CD8-positive, alpha-beta T cell (primary cell): ENCODE measurements at regions of chr12 and their contacts with region 1.

Region 1: DNA sequence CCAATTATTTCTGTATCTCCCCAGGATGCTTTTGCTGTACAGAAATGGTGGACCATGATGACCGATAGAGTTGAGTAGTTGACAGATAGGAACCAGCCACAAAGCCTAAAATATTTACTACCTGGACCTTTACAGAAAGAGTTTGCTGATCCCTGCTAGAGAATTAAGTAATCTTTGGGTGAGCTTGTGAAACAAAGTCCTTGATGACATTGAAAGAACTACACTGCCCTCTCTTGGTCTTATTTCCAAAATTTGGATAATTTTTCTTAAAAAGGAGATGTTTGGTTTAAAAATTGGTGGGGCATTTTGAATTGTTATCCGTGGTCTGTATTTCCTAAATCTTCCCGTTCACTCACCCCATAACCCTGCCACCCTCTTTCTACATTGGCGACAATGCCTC is 13.7 kb upstream of the TCTN1 start:
- DNase-seq: peak in 2 of 9 experiments; percentile 61 to 73
- ATAC-seq: peak; percentile 48
- H3K4me3 ChIP-seq: no peak overlapping the region
- H3K4me3 Mint-ChIP-seq: no peak overlapping the region
- H3K27ac ChIP-seq: no peak overlapping the region
- H3K27ac Mint-ChIP-seq: peak overlapping the region; percentile 34
- H3K4me1 ChIP-seq: no peaks in the 10 kb centered on the region
- H3K4me1 Mint-ChIP-seq: peaks cover 4% of the 10 kb centered on the region
- H3K27me3 ChIP-seq: no peaks in the 10 kb centered on the region
- H3K27me3 Mint-ChIP-seq: no peaks in the 10 kb centered on the region
- CTCF ChIP-seq: peak; percentile 56

Region 2: DNA sequence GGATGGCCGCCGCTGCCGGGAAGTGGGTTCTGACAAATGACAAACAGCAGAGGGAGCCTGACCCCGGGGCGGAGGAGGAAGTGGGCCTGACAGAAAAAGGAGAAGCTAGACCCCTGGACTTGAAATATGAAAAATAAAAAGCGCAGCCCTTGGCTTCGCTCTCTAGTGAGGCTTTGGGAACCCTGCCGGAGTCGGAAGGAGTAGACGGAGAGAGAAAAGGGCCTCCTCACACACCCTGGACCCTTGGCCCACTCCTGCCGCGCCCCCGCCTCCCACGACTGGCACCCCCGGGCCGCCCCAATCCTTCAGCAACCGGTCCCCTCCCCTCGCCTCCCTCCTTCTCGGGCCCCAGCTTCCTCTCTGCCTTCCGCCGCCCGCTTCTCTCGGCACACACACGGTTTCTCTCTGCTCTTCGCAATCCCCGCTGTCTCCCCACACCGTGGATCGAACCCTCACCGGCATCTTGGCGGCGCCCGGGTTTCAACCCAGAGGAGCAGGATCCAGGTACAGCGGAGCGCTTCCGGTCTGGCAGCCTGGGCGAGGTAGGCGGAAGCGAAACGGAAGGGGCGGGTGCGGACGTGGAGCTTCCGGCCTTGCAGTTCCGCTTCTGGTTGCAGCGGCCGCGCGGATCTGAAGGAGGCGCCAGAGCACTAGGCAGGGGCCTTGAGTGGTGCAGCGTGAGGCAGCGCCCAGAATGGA is 150.3 kb before region 1 on chr12 and contains the start of gene ARPC3:
- CTCF ChIA-PET with region 1: interaction called, 150 read pairs
- POLR2A ChIA-PET with region 1: interaction called, 23 read pairs
- intact Hi-C with region 1: loop called (anchors 1 kb)
- DNase-seq: peak; percentile 91 to 98 (median 95)
- ATAC-seq: peak; percentile 95
- H3K4me3 ChIP-seq: peak within 1 kb of the TSS; percentile 80 to 95
- H3K4me3 Mint-ChIP-seq: peak within 1 kb of the TSS; percentile 100
- H3K27ac ChIP-seq: peak within 1 kb of the TSS; percentile 93 to 98
- H3K27ac Mint-ChIP-seq: peak within 1 kb of the TSS; percentile 100
- H3K4me1 ChIP-seq: peaks cover 31% of the 10 kb centered on the region
- H3K4me1 Mint-ChIP-seq: peaks cover 35% of the 10 kb centered on the region
- H3K27me3 ChIP-seq: no peaks in the 10 kb centered on the region
- H3K27me3 Mint-ChIP-seq: no peaks in the 10 kb centered on the region
- CTCF ChIP-seq: peak; percentile 76
- total RNA-seq, gene ARPC3: 123 to 136 TPM

Region 3: GRCh38 chr12:110508071-110508586 is 92.1 kb before region 1 on chr12:
- CTCF ChIA-PET with region 1: interaction called, 128 read pairs
- POLR2A ChIA-PET with region 1: no interaction called
- intact Hi-C with region 1: loop called (anchors 1 kb)
- DNase-seq: no peak
- ATAC-seq: no peak
- H3K4me3 ChIP-seq: no peak overlapping the region
- H3K4me3 Mint-ChIP-seq: no peak overlapping the region
- H3K27ac ChIP-seq: no peak overlapping the region
- H3K27ac Mint-ChIP-seq: no peak overlapping the region
- H3K4me1 ChIP-seq: no peaks in the 10 kb centered on the region
- H3K4me1 Mint-ChIP-seq: peaks cover 2% of the 10 kb centered on the region
- H3K27me3 ChIP-seq: no peaks in the 10 kb centered on the region
- H3K27me3 Mint-ChIP-seq: no peaks in the 10 kb centered on the region
- CTCF ChIP-seq: no peak

Region 4: GRCh38 chr12:110537605-110538409 is 62.4 kb before region 1 on chr12:
- CTCF ChIA-PET with region 1: interaction called, 25 read pairs
- POLR2A ChIA-PET with region 1: no interaction called
- intact Hi-C with region 1: no loop called
- DNase-seq: no peak
- ATAC-seq: no peak
- H3K4me3 ChIP-seq: no peak overlapping the region
- H3K4me3 Mint-ChIP-seq: no peak overlapping the region
- H3K27ac ChIP-seq: no peak overlapping the region
- H3K27ac Mint-ChIP-seq: no peak overlapping the region
- H3K4me1 ChIP-seq: no peaks in the 10 kb centered on the region
- H3K4me1 Mint-ChIP-seq: peaks cover 7% of the 10 kb centered on the region
- H3K27me3 ChIP-seq: no peaks in the 10 kb centered on the region
- H3K27me3 Mint-ChIP-seq: no peaks in the 10 kb centered on the region
- CTCF ChIP-seq: no peak

Region 5: GRCh38 chr12:110563702-110564640 is 36.3 kb before region 1 on chr12:
- CTCF ChIA-PET with region 1: interaction called, 83 read pairs
- POLR2A ChIA-PET with region 1: interaction called, 3 read pairs
- intact Hi-C with region 1: no loop called
- DNase-seq: no peak
- ATAC-seq: no peak
- H3K4me3 ChIP-seq: no peak overlapping the region
- H3K4me3 Mint-ChIP-seq: no peak overlapping the region
- H3K27ac ChIP-seq: peak overlapping the region; percentile 9 to 61
- H3K27ac Mint-ChIP-seq: peak overlapping the region; percentile 82
- H3K4me1 ChIP-seq: peaks cover 61% of the 10 kb centered on the region
- H3K4me1 Mint-ChIP-seq: peaks cover 72% of the 10 kb centered on the region
- H3K27me3 ChIP-seq: no peaks in the 10 kb centered on the region
- H3K27me3 Mint-ChIP-seq: no peaks in the 10 kb centered on the region
- CTCF ChIP-seq: no peak

Region 6: GRCh38 chr12:110613771-110614684 is 13.8 kb after region 1 on chr12 and contains the start of gene TCTN1:
- CTCF ChIA-PET with region 1: interaction called, 66 read pairs
- POLR2A ChIA-PET with region 1: interaction called, 7 read pairs
- intact Hi-C with region 1: no loop called
- DNase-seq: peak; percentile 90 to 97 (median 95)
- ATAC-seq: peak; percentile 100
- H3K4me3 ChIP-seq: peak within 1 kb of the TSS; percentile 75 to 76
- H3K4me3 Mint-ChIP-seq: peak within 1 kb of the TSS; percentile 88
- H3K27ac ChIP-seq: peak within 1 kb of the TSS; percentile 78 to 83
- H3K27ac Mint-ChIP-seq: peak within 1 kb of the TSS; percentile 85
- H3K4me1 ChIP-seq: peaks cover 5% of the 10 kb centered on the region
- H3K4me1 Mint-ChIP-seq: peaks cover 7% of the 10 kb centered on the region
- H3K27me3 ChIP-seq: no peaks in the 10 kb centered on the region
- H3K27me3 Mint-ChIP-seq: no peaks in the 10 kb centered on the region
- CTCF ChIP-seq: no peak
- total RNA-seq, gene TCTN1: 4.7 to 4.9 TPM

Region 7: DNA sequence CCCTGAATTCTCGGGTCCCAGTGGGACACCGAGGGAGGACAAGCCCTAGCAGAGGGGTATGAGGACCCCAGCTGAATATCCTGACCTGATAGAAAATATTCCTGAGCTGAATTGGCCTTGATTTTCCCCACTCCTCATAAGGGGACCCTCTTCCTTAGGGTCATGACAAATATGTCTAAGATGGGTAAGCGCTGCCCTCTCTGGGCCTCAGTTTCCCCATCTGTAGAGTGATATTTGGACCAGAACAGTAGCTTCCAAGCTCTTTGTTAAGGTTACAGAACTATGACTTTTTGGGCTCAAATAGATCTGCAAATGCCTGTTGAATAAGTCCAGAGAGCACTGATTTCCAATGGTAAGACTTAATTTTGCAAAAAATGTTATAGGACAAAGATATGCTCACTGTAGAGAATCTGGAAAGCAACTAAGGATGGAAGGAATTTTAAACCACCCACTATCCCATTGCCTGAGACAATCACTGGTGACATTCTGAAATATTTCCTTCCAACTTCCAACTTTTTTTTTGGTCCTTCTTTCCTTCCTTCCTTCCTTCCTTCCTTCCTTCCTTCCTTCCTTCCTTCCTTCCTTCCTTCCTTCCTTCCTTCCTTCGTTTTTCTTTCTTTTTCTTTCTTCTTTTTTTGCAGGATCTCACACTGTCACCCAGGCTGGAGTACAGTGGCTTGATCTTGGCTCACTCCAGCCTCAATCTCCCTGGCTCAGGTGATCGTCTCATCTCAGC is 288.2 kb after region 1 on chr12:
- CTCF ChIA-PET with region 1: interaction called, 16 read pairs
- POLR2A ChIA-PET with region 1: no interaction called
- intact Hi-C with region 1: loop called in 1 of 2 experiments (anchors 5 kb)
- DNase-seq: no peak
- ATAC-seq: no peak
- H3K4me3 ChIP-seq: no peak overlapping the region
- H3K4me3 Mint-ChIP-seq: peak overlapping the region; percentile 94
- H3K27ac ChIP-seq: no peak overlapping the region
- H3K27ac Mint-ChIP-seq: no peak overlapping the region
- H3K4me1 ChIP-seq: no peaks in the 10 kb centered on the region
- H3K4me1 Mint-ChIP-seq: peaks cover 4% of the 10 kb centered on the region
- H3K27me3 ChIP-seq: no peaks in the 10 kb centered on the region
- H3K27me3 Mint-ChIP-seq: no peaks in the 10 kb centered on the region
- CTCF ChIP-seq: peak; percentile 48